ENCODE measurements at regions of chr3 and their contacts with region 1.

Region 1: DNA sequence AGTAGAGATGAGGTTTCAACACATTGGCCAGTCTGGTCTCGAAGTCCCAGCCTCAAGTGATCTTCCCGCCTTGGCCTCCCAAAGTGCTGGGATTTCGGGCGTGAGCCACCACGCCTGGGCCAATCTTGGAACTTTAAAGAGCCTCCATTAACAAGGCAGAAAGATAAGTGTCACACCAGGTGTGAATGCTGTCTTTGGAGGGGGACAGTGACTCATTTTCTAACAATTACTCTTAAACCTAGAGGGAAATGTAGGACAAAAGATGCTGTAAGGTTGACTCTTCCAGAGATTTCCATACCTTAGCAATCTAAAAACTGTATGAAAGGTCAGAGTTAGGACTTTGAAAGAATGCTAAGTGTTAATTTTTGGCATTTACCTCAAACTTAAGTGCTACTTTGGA is 84.9 kb downstream of the FNDC3B start:
- DNase-seq: no peak
- H3K4me3 ChIP-seq: no peak overlapping the region
- H3K27ac ChIP-seq: peak overlapping the region; percentile 60
- H3K4me1 ChIP-seq: peaks cover 48% of the 10 kb centered on the region
- H3K27me3 ChIP-seq: no peaks in the 10 kb centered on the region
- CTCF ChIP-seq: no peak
- POLR2A ChIP-seq: no peak

Region 2: DNA sequence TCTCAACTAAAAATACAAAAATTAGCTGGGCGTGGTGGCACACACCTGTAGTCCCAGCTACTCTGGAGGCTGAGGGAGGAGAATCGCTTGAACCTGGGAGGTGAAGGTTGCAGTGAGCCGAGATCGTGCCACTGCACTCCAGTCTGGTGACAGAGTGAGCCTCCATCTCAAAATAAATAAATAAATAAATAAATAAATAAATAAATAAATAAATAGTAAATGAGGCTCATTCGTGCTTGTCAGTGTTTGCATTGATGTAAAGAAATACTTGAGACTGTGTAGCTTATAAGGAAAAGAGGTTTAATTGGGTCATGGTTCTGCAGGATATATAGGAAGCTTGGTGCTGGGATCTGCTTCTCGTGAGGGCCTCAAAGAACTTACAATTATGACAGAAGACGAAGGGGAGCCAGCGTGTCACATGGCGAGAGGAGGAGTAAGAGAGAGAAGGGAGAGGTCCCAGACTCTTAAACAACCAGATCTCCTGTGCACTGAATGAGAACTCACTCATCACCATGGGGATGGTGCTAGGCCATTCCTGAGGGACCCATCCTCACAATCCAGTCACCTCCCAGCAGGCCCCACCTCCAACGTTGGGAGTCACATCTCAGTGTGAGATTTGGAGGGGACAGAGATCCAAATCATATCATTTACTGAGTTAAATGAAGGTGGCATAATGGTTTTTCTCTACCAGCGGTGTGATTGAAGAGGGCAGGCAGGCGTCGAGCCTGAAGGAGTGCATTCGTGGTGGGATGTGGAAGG is 19.6 kb after region 1 on chr3:
- intact Hi-C with region 1: loop called (anchors 1 kb)
- DNase-seq: no peak
- H3K4me3 ChIP-seq: no peak overlapping the region
- H3K27ac ChIP-seq: no peak overlapping the region
- H3K4me1 ChIP-seq: peaks cover 40% of the 10 kb centered on the region
- H3K27me3 ChIP-seq: no peaks in the 10 kb centered on the region
- CTCF ChIP-seq: no peak
- POLR2A ChIP-seq: no peak

Region 3: GRCh38 chr3:172213200-172213599 is 88.9 kb after region 1 on chr3:
- intact Hi-C with region 1: no loop called
- DNase-seq: no peak
- H3K4me3 ChIP-seq: no peak overlapping the region
- H3K27ac ChIP-seq: no peak overlapping the region
- H3K4me1 ChIP-seq: peaks cover 69% of the 10 kb centered on the region
- H3K27me3 ChIP-seq: no peaks in the 10 kb centered on the region
- CTCF ChIP-seq: no peak
- POLR2A ChIP-seq: no peak

Measured in vagina (tissue), 2 donors.